BJ (cell line): ENCODE measurements at regions of chr12 and their contacts with region 1.

Region 1: GRCh38 chr12:96489103-96490056 is at the start of gene CFAP54:
- DNase-seq: peak; percentile 43
- H3K4me3 ChIP-seq: peak within 1 kb of the TSS; percentile 70
- H3K27me3 ChIP-seq: no peaks in the 10 kb centered on the region
- CTCF ChIP-seq: peak; percentile 94
- polyA plus RNA-seq, gene CFAP54: 0.16 and 0.38 TPM in 2 replicates

Region 2: GRCh38 chr12:95848575-95849388 is 640.6 kb before region 1 on chr12:
- CTCF ChIA-PET with region 1: no interaction called
- POLR2A ChIA-PET with region 1: no interaction called
- DNase-seq: no peak
- H3K4me3 ChIP-seq: no peak overlapping the region
- H3K27me3 ChIP-seq: peaks cover 16% of the 10 kb centered on the region
- CTCF ChIP-seq: peak; percentile 26; the same call in 1 of the 2 replicates

Region 3: DNA sequence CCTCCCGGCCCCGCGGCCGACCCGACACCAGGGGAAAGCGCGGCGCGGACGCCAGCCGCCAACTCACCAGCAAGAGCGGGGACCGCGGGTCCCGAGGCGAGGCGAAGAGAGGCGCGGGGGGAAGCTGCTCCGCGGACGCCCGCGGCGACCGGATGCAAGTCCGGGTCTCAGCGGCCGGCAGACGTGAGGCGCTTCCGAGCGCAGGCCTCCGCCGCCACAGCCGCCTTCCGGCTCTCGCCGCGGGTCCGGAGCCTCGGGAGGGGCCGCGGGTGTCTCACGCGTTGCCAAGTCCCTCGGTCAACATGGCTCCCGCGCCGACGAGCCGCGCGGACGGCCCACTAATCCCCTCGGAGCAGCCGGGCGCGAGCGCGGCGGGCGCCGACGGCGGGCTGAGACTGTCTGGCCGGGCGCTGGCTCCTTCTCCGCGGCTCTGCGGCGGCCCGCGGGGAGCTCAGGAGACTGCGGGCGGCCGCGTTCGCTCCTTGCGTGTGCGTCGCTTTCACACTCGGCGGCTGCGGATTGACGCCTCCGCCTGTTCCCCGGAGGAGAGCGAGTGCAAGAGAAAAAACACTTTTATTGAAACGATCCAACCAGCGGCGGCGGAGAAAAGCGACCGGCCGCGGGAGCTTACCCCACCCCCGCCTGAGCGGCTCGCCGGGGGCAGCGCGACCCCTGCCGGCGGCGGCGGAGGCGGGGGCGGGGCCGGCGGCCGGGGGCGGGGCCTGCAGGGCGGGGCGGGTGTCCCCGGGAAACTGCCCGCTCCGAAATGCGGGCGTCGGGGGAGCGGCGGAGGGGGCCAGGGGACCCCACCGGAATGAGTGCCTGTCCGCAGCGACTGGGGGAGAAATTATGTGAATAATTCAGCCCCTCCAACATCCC is 89.2 kb before region 1 on chr12 and contains the start of gene CDK17:
- CTCF ChIA-PET with region 1: interaction called, 10 read pairs
- POLR2A ChIA-PET with region 1: no interaction called
- DNase-seq: no peak
- H3K4me3 ChIP-seq: peak within 1 kb of the TSS; percentile 80
- H3K27me3 ChIP-seq: no peaks in the 10 kb centered on the region
- CTCF ChIP-seq: peak; percentile 34; the same call in 1 of the 2 replicates
- polyA plus RNA-seq, gene CDK17: 14.8 and 32.8 TPM in 2 replicates

Region 4: DNA sequence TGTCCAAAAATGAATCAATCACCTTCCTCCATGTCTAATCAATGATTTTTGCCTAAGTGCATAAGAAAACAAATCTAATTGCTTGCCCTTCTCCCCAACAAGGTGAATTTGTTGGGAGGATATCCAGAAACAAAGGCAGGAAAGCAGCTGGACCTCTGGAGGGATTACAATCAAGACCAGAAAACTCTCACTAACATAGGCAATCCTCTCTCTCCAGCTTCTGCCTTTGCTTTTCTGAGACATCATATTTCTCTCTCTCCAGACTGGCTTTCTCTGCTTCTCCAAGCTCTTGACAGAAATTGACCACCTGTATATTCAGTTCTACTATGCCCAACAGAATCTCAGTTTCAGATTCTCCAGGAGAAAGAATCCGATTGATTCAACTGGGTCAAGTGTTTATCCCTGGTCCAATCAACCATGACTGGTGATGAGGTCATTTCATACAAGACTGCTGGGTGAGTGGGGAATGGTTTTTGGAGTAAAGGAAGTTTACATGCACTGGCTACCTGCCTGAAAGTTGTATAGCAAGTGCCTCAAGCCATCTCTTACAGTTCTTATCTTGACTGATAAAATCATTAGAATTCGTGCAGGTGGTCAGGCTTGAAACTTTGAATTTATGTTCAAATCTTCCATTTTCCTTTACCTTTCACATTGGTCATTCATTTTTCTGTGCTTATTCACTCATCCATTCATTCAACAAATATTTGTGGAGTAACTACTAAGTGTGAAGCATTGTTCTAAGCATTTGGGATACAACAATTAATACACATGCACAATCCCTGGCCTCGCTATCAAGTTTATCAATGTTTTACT is 22.2 kb before region 1 on chr12:
- CTCF ChIA-PET with region 1: interaction called, 11 read pairs
- POLR2A ChIA-PET with region 1: no interaction called
- DNase-seq: no peak
- H3K4me3 ChIP-seq: no peak overlapping the region
- H3K27me3 ChIP-seq: no peaks in the 10 kb centered on the region
- CTCF ChIP-seq: no peak

Region 5: GRCh38 chr12:96501139-96501761 is 11.9 kb after region 1 on chr12:
- CTCF ChIA-PET with region 1: interaction called, 11 read pairs
- POLR2A ChIA-PET with region 1: no interaction called
- DNase-seq: no peak
- H3K4me3 ChIP-seq: no peak overlapping the region
- H3K27me3 ChIP-seq: no peaks in the 10 kb centered on the region
- CTCF ChIP-seq: no peak